AG04450 (cell line): ENCODE measurements at regions of chr18 and their contacts with region 1.

Region 1: DNA sequence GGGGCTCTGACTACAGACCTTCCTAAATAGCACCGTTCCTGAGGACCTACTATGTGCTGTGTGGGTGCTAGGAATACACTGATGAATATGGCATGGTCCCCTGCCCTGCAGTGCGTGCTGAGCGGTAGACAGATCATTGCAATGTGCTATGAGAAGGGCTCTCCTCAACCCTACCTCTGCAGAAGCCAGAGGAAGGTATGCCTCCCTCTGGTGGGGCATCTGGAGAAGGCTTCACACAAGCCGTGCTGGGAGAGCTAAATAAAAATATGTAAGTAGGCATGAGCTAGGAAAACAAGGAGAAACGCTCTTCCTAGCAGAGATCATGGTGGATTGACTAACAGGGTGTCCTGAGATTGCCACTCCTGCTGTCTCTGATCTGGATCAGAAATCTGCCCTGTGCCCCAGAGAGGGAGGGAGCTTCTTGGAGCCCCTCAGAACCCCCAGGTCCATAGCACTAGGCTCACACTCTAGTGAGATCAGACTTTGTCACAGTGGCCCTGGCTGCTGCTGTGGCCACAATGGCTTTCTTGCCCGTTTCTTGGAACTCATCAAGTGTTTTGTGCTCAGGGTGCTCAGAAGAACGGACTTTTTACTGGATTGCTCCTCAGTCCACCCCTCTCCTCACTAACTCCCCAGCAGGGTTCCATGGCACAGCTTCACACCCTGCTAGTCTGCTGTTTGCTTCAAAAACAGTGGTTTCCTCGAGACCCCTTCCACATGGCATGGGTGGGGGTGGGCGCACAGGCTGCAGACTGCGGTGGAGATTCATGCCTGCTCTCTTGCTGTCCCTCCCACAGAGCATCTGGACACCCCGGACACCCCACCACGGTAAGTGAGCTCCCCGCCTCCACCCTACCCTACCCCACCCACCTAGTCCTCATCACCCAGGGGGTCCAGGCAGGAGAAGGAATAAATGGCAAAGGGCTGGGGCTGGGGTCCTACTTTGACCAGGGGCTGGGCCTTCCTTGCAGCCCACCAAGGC is 14.2 kb downstream of the SIGLEC15 start:
- DNase-seq: peak; percentile 65
- H3K4me3 ChIP-seq: no peak overlapping the region
- H3K27ac ChIP-seq: no peak overlapping the region
- H3K27me3 ChIP-seq: no peaks in the 10 kb centered on the region
- CTCF ChIP-seq: peak; percentile 88

Region 2: DNA sequence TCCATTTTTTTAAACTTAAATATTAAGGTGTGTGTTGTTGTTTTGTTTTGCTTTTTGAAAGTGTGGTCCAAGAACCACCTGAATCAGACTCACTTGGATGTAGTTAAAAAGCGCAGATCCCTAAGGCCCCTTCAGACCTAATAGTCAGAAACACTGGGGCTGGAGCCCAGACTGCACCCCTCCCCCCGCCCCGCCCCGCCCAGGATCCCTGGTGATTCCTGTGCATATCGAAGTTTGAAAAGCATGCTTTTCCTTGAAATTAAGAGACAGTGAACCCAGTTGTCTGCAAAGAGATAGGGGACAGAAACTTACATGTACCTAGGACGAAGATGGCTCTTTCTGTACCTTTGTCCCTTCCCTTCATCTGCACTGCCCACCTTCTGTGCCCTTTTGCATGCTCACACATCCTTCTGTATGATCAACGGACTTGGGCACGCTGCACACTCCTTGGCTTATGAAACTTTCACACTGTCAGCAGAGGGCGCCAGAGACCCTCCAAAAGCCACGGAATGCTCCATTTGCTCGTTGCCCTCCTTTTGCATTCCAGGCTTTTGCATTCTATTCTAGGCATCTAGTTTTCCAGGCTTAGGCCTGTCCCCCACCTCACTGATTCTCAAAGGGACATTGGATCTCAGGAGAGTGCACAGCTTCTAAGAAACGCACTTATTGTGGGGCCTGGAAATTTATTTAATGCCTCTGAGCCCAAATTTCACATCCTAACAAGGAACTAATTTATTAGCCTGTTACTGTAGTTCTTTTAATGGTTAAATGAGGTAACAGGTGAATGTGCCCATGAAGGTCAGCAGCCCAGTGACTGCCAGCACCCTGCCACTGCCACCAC is 148.5 kb before region 1 on chr18:
- CTCF ChIA-PET with region 1: interaction called, 15 read pairs
- POLR2A ChIA-PET with region 1: no interaction called
- DNase-seq: peak; percentile 60
- H3K4me3 ChIP-seq: no peak overlapping the region
- H3K27ac ChIP-seq: no peak overlapping the region
- H3K27me3 ChIP-seq: no peaks in the 10 kb centered on the region
- CTCF ChIP-seq: peak; percentile 84

Region 3: DNA sequence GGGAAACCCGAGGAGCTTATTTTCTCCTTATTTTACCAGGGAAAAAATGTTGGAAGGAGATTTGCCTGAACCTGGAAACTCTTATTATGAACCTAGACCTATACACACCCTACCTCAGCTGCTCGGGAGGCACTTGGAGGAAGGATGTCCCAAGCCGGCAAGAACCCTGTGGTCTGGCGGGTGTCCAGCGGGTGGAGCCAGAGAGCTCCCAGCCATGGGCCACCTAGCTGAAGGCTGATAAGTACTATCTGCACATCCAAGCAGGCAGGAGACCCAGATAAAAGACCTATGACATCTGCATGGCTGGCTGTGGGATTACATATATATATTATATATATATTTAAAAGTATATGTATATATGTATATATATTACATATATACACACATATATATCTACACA is 116.8 kb before region 1 on chr18:
- CTCF ChIA-PET with region 1: interaction called, 37 read pairs
- POLR2A ChIA-PET with region 1: no interaction called
- DNase-seq: peak; percentile 42
- H3K4me3 ChIP-seq: no peak overlapping the region
- H3K27ac ChIP-seq: no peak overlapping the region
- H3K27me3 ChIP-seq: no peaks in the 10 kb centered on the region
- CTCF ChIP-seq: peak; percentile 88

Region 4: DNA sequence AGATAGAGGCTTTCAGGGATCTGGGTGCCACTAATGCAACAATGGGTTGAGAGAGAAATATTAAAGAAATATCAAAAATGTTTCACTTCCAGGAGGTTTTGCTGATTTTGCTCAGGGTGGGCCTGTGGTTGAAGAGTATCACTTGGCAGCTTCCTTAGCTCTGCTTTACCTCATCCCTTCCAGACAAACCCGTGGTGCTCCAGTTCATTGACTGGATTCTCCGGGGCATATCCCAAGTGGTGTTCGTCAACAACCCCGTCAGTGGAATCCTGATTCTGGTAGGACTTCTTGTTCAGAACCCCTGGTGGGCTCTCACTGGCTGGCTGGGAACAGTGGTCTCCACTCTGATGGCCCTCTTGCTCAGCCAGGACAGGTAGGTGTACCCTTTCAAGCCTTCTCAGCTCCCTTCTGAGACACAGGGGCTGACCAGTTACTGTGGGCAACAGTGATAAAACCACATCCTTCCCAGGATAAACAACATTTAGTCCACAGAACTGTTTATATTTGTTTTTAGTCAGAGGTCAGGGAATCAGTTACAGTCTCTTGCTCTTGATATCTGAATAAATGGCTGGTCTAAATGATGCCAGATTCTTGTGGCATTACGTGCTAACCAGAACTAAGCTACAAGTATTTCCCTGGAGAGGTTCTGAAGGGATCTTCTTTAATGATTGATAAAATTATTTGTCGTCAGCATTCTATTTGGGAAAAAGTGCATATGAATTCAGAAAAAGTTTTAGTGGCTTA is 108.7 kb before region 1 on chr18:
- CTCF ChIA-PET with region 1: interaction called, 23 read pairs
- POLR2A ChIA-PET with region 1: no interaction called
- DNase-seq: peak; percentile 66
- H3K4me3 ChIP-seq: no peak overlapping the region
- H3K27ac ChIP-seq: peak overlapping the region; percentile 76
- H3K27me3 ChIP-seq: no peaks in the 10 kb centered on the region
- CTCF ChIP-seq: no peak

Region 5: GRCh38 chr18:45755934-45756333 is 83.8 kb before region 1 on chr18:
- CTCF ChIA-PET with region 1: no interaction called
- POLR2A ChIA-PET with region 1: no interaction called
- DNase-seq: no peak
- H3K4me3 ChIP-seq: no peak overlapping the region
- H3K27ac ChIP-seq: no peak overlapping the region
- H3K27me3 ChIP-seq: no peaks in the 10 kb centered on the region
- CTCF ChIP-seq: no peak

Region 6: GRCh38 chr18:45850021-45850420 is 10.3 kb after region 1 on chr18:
- CTCF ChIA-PET with region 1: interaction called, 18 read pairs
- POLR2A ChIA-PET with region 1: no interaction called
- DNase-seq: no peak
- H3K4me3 ChIP-seq: no peak overlapping the region
- H3K27ac ChIP-seq: no peak overlapping the region
- H3K27me3 ChIP-seq: no peaks in the 10 kb centered on the region
- CTCF ChIP-seq: peak; percentile 41; the same call in 1 of the 2 replicates